Tibial artery (tissue), 4 donors: ENCODE measurements at regions of chrX and their contacts with region 1.

Region 1: DNA sequence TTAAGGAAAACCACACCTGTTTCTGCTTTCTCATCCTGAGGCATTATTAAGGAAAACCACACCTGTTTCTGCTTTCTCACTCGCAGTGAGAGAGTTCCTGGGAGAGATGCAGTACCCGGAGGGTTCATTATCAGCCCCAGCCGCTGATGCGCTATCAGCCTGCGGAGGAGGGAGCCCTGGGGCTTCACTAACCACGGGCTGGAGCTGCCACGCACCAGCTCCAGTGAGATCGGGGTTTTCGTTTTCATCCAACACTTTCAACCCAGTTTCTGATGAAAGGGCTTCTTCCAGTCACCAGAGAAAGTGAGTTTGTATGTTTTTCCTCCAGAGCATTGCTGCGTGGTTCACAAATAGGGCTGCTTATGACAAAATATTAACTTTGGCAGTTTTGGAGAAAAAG is 93.2 kb upstream of the PRKX start:
- DNase-seq: no peak
- H3K4me3 ChIP-seq: no peak overlapping the region
- H3K27ac ChIP-seq: no peak overlapping the region
- H3K4me1 ChIP-seq: no peaks in the 10 kb centered on the region
- H3K27me3 ChIP-seq: no peaks in the 10 kb centered on the region
- CTCF ChIP-seq: no peak

Region 2: GRCh38 chrX:3651276-3651675 is 155.4 kb before region 1 on chrX:
- intact Hi-C with region 1: loop called (anchors 5 kb)
- DNase-seq: no peak
- H3K4me3 ChIP-seq: no peak overlapping the region
- H3K27ac ChIP-seq: no peak overlapping the region
- H3K4me1 ChIP-seq: no peaks in the 10 kb centered on the region
- H3K27me3 ChIP-seq: no peaks in the 10 kb centered on the region
- CTCF ChIP-seq: peak; percentile 34 to 47

Region 3: DNA sequence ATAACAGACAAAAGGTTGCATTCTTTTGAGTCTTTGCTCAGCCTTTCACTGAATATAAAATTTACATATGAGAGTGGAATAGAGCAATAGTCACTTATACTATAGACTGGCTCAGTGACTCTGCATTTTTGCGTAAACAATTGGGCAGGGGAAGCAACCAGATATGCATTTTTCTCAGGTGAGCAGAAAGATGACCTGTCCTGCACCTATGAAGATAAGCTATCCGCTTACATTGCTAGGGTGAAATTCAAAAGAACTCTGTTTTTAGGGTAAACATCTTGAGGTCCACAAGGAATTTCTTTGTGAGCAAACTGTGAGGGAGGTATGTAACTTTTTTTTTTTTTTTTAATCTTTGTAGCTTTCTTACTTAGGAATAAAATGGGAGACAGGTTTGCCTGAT is 509.3 kb after region 1 on chrX:
- intact Hi-C with region 1: no loop called
- DNase-seq: no peak
- H3K4me3 ChIP-seq: no peak overlapping the region
- H3K27ac ChIP-seq: no peak overlapping the region
- H3K4me1 ChIP-seq: no peaks in the 10 kb centered on the region
- H3K27me3 ChIP-seq: no peaks in the 10 kb centered on the region
- CTCF ChIP-seq: no peak